OCI-LY7 (cell line): ENCODE measurements at regions of chr9 and their contacts with region 1.

Region 1: DNA sequence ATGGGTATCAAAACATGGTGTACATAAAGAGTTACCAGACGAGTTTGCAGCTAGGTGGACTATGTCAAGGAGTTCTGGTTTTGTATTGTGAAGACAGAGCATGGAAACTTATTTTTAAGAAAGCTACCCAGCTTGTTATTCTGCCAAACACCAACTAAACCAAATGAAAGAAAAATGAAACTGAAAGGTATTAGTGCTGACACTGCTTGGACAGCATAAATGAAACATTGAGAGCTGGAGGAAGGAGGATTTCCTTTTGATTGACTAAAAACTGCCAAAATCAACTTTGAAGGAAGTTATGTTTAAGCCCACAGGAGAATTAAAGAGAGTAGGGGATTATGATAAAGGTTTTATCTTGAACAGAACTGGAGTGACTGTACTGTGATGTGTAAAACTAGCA is 766.2 kb downstream of the PTPRD start:
- DNase-seq: peak; percentile 16
- H3K4me3 ChIP-seq: no peak overlapping the region
- H3K27ac ChIP-seq: no peak overlapping the region
- H3K4me1 ChIP-seq: no peaks in the 10 kb centered on the region
- CTCF ChIP-seq: no peak

Region 2: GRCh38 chr9:9820436-9820835 is 26.1 kb before region 1 on chr9:
- CTCF ChIA-PET with region 1: no interaction called
- POLR2A ChIA-PET with region 1: interaction called, 19 read pairs
- intact Hi-C with region 1: no loop called
- DNase-seq: no peak
- H3K4me3 ChIP-seq: no peak overlapping the region
- H3K27ac ChIP-seq: no peak overlapping the region
- H3K4me1 ChIP-seq: no peaks in the 10 kb centered on the region
- CTCF ChIP-seq: no peak

Region 3: DNA sequence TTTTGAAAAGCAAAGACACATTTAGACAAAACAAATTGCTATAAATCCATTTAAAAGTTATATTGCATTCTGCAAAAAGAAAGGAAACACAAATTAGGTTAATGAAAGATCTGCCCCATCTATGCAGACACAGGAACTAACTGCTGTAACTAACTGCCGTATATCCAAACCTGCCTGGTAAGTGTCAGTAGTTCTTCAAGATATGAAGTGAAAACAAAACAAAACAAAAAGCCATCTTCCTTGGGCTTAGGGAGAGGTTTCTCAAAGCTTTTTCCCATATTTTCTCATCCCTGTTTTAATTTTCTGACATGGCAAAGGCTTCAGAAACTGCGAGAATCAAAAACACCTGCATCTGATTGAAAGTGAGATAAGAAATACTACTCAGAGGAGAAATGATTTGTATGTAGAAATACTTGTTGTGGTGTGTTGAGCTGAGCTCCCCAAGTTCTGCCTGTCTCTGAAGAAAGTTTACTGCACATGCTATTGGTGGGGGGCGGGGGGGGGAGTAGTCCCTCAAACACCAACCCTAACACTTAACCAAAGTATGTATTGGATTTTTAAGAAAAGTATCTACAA is 15.8 kb after region 1 on chr9:
- CTCF ChIA-PET with region 1: no interaction called
- POLR2A ChIA-PET with region 1: interaction called, 57 read pairs
- intact Hi-C with region 1: no loop called
- DNase-seq: no peak
- H3K4me3 ChIP-seq: no peak overlapping the region
- H3K27ac ChIP-seq: no peak overlapping the region
- H3K4me1 ChIP-seq: no peaks in the 10 kb centered on the region
- CTCF ChIP-seq: no peak

Region 4: GRCh38 chr9:9874270-9874669 is 27.7 kb after region 1 on chr9:
- CTCF ChIA-PET with region 1: no interaction called
- POLR2A ChIA-PET with region 1: interaction called, 19 read pairs
- intact Hi-C with region 1: no loop called
- DNase-seq: no peak
- H3K4me3 ChIP-seq: no peak overlapping the region
- H3K27ac ChIP-seq: no peak overlapping the region
- H3K4me1 ChIP-seq: no peaks in the 10 kb centered on the region
- CTCF ChIP-seq: no peak

Region 5: DNA sequence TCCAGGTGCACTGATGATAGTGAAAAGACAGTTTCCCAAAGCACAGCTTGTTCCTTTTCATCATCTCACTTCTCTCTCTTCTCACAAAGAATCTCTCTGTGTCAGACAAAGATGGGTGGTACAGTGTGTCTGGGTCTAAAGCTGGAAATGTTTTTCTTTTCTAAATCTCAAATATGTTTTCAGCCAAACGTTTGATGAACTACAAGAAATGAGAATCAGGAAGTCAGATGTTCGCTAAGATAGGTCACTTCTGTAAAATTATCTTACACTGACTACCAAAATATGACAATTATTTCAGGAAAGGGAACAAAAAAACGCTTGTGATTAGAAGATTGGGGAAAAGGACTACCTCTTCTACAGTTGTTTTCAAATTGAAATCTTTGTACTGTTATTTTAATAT is 57.5 kb after region 1 on chr9:
- CTCF ChIA-PET with region 1: interaction called, 3 read pairs
- POLR2A ChIA-PET with region 1: interaction called, 18 read pairs
- intact Hi-C with region 1: loop called (anchors 5 kb)
- DNase-seq: peak; percentile 38
- H3K4me3 ChIP-seq: peak overlapping the region; percentile 33
- H3K27ac ChIP-seq: peak overlapping the region; percentile 69
- H3K4me1 ChIP-seq: peaks cover 33% of the 10 kb centered on the region
- CTCF ChIP-seq: no peak

Region 6: GRCh38 chr9:9992936-9993335 is 146.4 kb after region 1 on chr9:
- CTCF ChIA-PET with region 1: no interaction called
- POLR2A ChIA-PET with region 1: no interaction called
- intact Hi-C with region 1: no loop called
- DNase-seq: no peak
- H3K4me3 ChIP-seq: no peak overlapping the region
- H3K27ac ChIP-seq: no peak overlapping the region
- H3K4me1 ChIP-seq: no peaks in the 10 kb centered on the region
- CTCF ChIP-seq: no peak